ENCODE measurements at regions of chr3 and their contacts with region 1.

Region 1: DNA sequence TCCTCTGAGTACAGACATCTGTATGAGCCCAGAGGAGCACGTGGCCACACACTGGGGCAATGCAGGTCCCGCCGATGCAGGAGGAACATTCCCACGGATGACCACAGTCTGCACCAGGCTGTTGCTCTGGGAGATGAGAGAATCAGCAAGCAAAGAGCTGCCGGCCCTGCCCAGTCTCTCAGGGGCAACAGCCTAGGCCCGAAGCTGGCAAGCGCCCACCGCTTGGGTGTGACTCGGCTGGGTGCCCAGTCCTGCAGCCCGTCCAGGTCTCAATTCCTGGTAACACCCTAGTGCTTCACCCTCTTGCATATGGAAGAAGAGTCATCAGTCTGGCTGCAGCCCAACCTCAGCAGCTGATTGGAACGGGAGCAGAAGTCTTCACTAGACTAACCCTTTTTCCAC is 153.7 kb upstream of the HES1 start:
- DNase-seq: peak; percentile 12

Region 2: DNA sequence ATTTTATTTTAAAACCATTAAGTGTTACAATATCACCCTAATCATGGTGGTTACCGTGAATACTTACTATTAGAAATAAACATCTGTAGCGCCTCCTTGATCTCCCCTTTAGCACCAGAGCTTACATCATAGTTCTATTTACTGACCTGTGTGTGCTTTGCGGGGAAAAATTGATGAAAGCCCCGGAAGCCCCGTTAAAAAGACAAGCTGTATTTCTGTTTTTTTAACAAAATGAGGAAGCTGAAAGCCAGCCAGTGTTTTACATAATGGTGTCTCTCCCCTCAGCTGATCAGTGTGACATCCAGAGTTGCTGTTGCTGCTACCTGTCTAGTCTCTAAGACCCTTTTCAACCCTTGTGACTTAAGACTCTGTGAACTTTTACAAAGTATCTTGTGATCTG is 288.5 kb before region 1 on chr3:
- in situ Hi-C with region 1: no loop called
- DNase-seq: no peak

Region 3: DNA sequence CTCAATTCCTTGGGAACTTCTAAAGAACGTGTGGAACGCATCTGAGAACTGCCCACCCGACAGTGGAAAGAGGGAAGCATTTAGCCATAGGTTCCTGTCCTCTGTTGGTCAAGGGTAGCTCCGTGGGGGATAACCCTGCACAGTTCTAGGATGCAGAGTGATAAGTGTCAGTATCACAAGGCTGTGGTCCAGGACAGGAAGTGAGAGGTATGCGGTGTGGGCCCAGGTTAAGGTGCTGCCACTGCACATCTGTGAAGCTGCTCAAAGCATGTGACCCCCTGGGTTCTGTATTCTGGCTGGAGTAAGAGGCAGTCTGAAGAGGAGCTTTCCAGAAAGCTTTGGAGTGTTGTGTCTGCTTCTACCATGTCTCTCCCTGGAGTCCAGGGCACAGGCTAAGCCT is 102.0 kb after region 1 on chr3:
- in situ Hi-C with region 1: no loop called
- DNase-seq: no peak

Region 4: DNA sequence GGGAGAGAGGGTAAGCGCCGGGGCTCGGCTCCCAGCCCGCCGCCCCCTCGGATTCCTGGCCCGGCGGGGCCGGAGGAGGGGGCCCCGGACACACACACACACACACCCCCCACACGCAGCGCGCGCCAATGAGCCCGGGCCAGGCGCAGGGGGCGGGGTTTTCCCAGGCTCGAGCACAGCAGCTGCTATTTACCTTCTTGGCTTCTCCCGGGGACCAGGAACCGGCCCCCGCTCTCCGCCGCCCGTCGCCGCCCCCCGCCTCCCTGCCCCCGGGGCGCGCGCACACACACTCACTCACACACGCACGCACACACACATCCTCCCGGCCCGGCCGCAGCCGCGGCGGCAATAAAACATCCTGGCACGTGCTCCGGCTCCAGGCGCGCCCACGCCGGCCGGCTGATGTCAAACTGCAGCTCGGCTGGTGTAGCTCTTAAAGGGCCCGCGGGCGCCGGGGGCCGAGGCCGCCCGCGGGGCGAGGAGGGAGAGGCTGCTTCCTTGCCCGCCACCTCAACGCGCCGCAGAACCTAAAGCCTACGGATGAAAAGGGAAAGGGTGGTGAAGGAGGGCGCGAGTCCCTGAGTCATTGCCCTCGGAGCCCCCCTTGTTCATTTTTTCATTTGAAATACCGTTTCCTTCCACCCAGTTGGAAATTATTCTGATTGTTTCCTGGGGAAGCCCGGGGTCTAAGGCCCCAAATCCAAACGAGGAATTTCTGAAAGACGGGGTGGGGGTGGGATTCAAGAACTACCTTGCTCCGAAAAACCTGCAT is 152.7 kb after region 1 on chr3:
- in situ Hi-C with region 1: loop called (anchors 10 kb)
- DNase-seq: peak; percentile 40